Right ventricle myocardium superior (tissue), 1 donor: ENCODE measurements at regions of chr5 and their contacts with region 1.

Region 1: DNA sequence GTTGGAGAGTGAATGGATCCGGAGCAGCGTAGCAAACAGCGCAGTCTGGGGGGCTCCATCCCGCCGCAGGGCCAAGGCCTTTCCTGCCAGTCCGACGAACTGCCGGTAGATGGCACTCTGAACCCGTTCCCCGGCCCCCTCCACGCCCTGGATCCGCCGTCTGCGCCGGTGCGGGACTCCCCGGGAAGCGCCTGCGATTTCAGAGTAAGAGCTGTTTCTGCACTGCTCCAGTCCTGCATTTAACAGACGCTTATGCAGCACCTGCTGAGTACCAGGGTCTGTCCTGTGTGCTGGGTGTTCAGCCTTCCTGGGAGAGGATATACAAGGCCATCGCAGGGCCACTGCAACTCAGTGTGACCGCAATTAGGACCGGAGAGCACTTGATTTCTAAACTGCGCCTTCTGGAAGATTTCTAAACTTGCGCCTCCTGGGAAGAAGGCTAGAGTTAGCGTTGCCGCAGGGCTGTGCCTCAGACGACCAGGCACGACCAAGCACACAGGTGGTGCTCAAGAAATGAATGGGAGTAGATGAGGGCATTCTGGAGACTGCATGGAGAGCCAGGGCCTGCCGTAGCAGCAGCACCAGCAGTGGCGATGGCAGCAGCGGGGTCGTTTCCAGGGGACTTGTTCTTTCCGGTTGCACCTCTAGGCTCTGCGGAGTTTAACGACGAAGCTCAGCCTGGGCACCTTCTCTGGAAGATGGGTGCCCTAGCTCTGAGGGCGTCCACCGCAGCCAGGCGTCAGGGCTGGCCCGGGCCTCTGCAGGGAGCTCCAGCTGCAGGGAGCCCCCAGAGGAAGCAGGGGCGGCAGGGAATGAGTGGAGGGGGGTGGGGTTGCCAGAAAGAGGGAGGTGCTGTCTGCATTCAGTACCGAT is 14.3 kb upstream of the TIFAB start:
- DNase-seq: peak; percentile 84
- ATAC-seq: peak; percentile 98

Region 2: GRCh38 chr5:135551593-135552447 is 85.4 kb after region 1 on chr5:
- intact Hi-C with region 1: loop called (anchors 2 kb)
- DNase-seq: peak; percentile 57
- ATAC-seq: peak; percentile 79

Region 3: GRCh38 chr5:135829681-135830383 is 363.4 kb after region 1 on chr5:
- intact Hi-C with region 1: loop called (anchors 10 kb)
- DNase-seq: peak; percentile 78
- ATAC-seq: peak; percentile 66